ENCODE measurements at regions of chr6 and their contacts with region 1.

Region 1: DNA sequence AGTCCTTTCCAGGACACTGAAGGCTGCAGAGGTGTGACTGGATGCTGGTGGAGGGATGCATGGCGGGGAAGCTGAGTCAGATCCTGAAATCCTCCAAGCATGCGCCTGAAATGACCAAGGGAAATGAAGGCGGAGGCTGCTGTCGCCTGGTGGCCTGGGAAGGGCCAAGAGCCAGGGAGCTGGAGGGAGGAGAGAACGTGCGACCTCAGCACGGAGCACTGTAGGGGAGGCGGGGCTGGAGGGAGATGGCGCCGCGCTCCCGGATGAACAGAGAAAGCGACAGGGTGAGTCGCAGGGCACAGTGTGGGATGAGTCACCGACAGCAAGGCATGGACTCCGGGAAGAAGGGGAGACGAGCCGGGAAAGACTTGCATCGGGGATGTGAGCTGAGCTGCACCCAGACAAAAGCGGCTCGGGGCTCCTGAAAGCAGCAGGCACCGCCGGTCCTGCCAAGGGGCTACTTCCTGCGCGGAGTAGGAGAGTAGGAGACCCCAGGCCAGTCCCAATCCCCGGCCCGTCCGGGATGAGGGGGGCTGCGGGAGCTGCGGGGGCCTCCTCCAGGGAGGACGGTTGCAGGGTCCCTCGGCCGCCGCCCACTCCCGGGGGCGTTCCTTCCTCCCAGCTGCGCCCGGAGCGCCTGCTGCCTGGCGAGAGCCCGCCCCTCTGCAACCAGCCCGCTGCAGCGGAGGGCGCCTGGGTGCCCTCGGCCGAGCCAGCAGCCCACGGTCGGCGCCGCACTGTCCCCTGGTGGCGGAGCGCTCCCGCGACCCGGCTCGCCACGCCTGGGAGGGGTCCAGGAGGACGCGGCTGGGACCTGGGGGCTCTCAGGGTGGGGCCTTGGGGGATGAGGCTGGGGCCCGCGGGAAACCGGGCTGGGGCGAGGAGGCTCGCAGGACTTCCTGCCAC is 11.0 kb upstream of the NQO2 start:
- DNase-seq: peak; percentile 71 to 86 (median 77)
- H3K4me3 ChIP-seq: peak overlapping the region; percentile 78
- H3K4me3 Mint-ChIP-seq: peak overlapping the region; percentile 87 to 97 (median 96)
- H3K27ac ChIP-seq: peak overlapping the region; percentile 98
- H3K27ac Mint-ChIP-seq: peak overlapping the region; percentile 98 to 100 (median 99)
- H3K4me1 ChIP-seq: peaks cover 23% of the 10 kb centered on the region
- H3K4me1 Mint-ChIP-seq: peaks cover 27 to 38% (median 31%) of the 10 kb centered on the region in 3 donors
- H3K27me3 ChIP-seq: no peaks in the 10 kb centered on the region
- H3K27me3 Mint-ChIP-seq: no peaks in the 10 kb centered on the region

Region 2: DNA sequence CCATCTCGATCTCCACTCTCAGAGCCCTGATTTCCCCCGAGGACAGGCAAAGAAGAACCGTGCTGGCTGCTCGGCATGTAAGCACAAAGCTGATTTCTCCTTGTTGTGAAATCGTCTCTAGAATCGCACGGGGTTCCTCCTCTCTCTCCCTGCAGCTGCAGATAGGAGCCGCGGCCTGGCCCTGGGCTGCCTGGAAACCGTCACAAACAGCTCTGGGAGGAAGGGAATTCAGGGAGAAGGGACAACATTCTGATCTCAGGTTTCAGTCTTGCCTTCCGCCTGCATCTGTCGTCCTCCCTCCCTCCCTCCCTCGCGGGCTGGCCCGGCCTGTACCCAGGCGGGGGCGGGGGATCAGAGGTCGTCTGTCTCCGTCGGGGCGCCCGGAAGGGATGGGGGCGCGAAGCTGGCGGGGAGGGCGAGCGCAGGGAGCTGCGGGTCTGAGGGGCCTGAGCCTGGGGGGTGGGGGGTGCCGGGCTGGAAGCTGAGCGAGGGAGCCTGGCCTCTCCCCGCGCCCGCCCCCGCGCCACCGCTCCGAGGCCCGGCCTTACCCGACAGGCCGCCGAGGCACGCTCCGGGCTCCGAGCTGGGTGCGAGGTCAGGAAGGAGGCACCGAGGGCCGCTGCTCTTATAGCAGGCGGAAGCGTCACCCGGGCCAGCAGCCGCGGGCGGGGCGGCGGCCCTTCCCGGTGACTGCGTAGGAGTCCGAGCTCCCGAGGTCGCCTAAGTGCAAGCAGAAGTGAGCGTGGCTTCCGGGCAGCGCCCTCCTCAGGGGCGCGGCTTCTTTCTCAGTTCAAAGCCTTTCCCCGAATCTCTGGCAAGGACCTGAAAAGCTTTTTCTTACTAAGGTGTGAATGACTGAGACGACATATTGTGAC is 147.2 kb before region 1 on chr6 and contains the start of gene SERPINB1:
- CTCF ChIA-PET with region 1: interaction called, 41 read pairs
- POLR2A ChIA-PET with region 1: interaction called, 29 read pairs
- DNase-seq: peak; percentile 55 to 82 (median 69)
- H3K4me3 ChIP-seq: peak within 1 kb of the TSS; percentile 82
- H3K4me3 Mint-ChIP-seq: peak within 1 kb of the TSS; percentile 88 to 95 (median 90)
- H3K27ac ChIP-seq: peak within 1 kb of the TSS; percentile 82
- H3K27ac Mint-ChIP-seq: peak within 1 kb of the TSS; percentile 90 to 98 (median 94)
- H3K4me1 ChIP-seq: peaks cover 33% of the 10 kb centered on the region
- H3K4me1 Mint-ChIP-seq: peaks cover 43 to 60% (median 52%) of the 10 kb centered on the region in 3 donors
- H3K27me3 ChIP-seq: no peaks in the 10 kb centered on the region
- H3K27me3 Mint-ChIP-seq: no peaks in the 10 kb centered on the region
- total RNA-seq, gene SERPINB1: 40.4 to 42.4 TPM

Region 3: DNA sequence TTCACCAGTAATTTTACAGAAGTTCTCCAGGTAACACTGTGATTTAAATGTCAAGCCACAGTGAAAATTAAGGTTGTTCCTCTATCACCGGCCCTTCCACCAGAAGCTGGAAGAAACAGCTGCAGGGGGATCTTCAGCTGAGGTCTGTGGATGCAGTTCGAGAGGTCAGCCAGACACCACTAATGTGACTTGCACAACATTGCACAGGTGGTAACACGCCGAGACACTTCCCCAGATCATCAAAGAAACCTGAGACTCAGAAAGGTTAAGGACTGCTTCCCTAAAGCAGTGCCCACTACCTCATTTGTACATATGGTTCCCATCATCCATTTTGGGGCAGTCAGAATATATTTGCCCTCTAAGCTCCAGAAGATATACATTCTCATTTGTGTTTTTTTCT is 77.5 kb before region 1 on chr6:
- CTCF ChIA-PET with region 1: interaction called, 11 read pairs
- POLR2A ChIA-PET with region 1: no interaction called
- DNase-seq: no peak
- H3K4me3 ChIP-seq: no peak overlapping the region
- H3K4me3 Mint-ChIP-seq: no peak overlapping the region
- H3K27ac ChIP-seq: no peak overlapping the region
- H3K27ac Mint-ChIP-seq: no peak overlapping the region
- H3K4me1 ChIP-seq: no peaks in the 10 kb centered on the region
- H3K4me1 Mint-ChIP-seq: peaks cover 8 to 22% (median 22%) of the 10 kb centered on the region in 3 donors
- H3K27me3 ChIP-seq: no peaks in the 10 kb centered on the region
- H3K27me3 Mint-ChIP-seq: no peaks in the 10 kb centered on the region

Region 4: GRCh38 chr6:2952557-2953095 is 36.1 kb before region 1 on chr6:
- CTCF ChIA-PET with region 1: interaction called, 32 read pairs
- POLR2A ChIA-PET with region 1: no interaction called
- DNase-seq: peak in 4 of 5 donors; percentile 13 to 63 (median 24)
- H3K4me3 ChIP-seq: no peak overlapping the region
- H3K4me3 Mint-ChIP-seq: no peak overlapping the region
- H3K27ac ChIP-seq: no peak overlapping the region
- H3K27ac Mint-ChIP-seq: peak overlapping the region in 2 of 8 donors; percentile 62 to 81
- H3K4me1 ChIP-seq: peaks cover 4% of the 10 kb centered on the region
- H3K4me1 Mint-ChIP-seq: no peaks in the 10 kb centered on the region
- H3K27me3 ChIP-seq: no peaks in the 10 kb centered on the region
- H3K27me3 Mint-ChIP-seq: no peaks in the 10 kb centered on the region

Region 5: DNA sequence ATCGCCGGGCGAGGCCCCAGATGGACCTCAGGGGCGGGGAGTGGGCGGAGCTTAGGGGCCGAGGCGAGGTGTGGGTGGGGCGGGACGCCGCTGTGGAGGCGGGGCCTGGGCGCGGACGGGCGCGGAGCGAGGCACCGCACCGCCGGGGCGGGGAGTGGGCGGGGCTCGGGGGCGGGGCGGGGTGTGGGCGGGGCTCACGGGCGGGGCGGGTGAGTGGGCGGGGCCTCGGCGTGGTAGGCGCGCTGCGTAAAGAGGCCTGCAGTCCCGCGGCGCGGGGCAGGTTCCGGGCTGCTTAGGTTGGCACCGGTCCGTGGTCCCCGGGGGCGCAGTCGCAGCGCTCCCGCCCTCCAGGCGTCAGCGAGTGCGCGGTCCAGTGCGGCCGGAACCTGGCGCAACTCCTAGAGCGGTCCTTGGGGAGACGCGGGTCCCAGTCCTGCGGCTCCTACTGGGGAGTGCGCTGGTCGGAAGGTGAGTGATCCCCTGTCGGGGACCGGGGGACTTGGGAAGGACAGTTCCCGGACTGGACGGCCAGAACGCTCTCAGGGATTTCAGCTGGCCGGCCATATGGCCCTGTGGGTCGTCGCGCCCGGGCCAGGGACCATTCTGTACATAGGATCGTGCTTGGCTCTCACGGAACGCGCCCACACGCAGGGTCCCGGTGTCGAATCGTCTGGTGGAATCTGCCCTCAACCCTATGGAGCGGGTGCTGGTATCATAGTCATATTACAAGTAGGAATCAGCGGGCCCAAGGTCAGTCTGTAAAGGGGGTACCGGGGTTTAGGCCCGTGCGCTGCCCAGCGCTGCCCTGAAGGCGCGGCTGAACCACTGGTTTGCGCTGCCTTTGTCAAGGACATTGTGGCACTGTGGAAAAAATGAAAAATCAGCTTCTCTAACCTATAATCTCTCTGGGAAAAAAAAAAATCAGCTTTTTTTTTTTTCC is 11.2 kb after region 1 on chr6 and contains the start of gene NQO2:
- CTCF ChIA-PET with region 1: interaction called, 9 read pairs
- POLR2A ChIA-PET with region 1: interaction called, 25 read pairs
- DNase-seq: peak; percentile 82 to 94 (median 88)
- H3K4me3 ChIP-seq: peak within 1 kb of the TSS; percentile 95
- H3K4me3 Mint-ChIP-seq: peak within 1 kb of the TSS; percentile 89 to 94 (median 92)
- H3K27ac ChIP-seq: peak within 1 kb of the TSS; percentile 83
- H3K27ac Mint-ChIP-seq: peak within 1 kb of the TSS; percentile 80 to 96 (median 92)
- H3K4me1 ChIP-seq: peaks cover 19% of the 10 kb centered on the region
- H3K4me1 Mint-ChIP-seq: peaks cover 28 to 38% (median 35%) of the 10 kb centered on the region in 3 donors
- H3K27me3 ChIP-seq: no peaks in the 10 kb centered on the region
- H3K27me3 Mint-ChIP-seq: peaks cover 0 to 4% of the 10 kb centered on the region in 2 donors
- total RNA-seq, gene NQO2: 15.6 to 18.5 TPM

Measured in CD8-positive, alpha-beta memory T cell (primary cell).